Activated CD4-positive, alpha-beta memory T cell treated with anti-CD3 and anti-CD28 coated beads for 36 hours (primary cell): ENCODE measurements at regions of chr9 and their contacts with region 1.

Region 1: GRCh38 chr9:78011049-78011448 is 20.6 kb downstream of the GNAQ start:
- DNase-seq: no peak
- H3K4me3 Mint-ChIP-seq: no peak overlapping the region
- H3K27ac Mint-ChIP-seq: peak overlapping the region; percentile 67
- H3K4me1 Mint-ChIP-seq: peaks cover 63% of the 10 kb centered on the region
- H3K27me3 Mint-ChIP-seq: no peaks in the 10 kb centered on the region

Region 2: GRCh38 chr9:77864211-77864889 is 146.7 kb before region 1 on chr9:
- CTCF ChIA-PET with region 1: no interaction called
- POLR2A ChIA-PET with region 1: no interaction called
- intact Hi-C with region 1: no loop called
- DNase-seq: no peak
- H3K4me3 Mint-ChIP-seq: no peak overlapping the region
- H3K27ac Mint-ChIP-seq: no peak overlapping the region
- H3K4me1 Mint-ChIP-seq: peaks cover 9% of the 10 kb centered on the region
- H3K27me3 Mint-ChIP-seq: no peaks in the 10 kb centered on the region

Region 3: DNA sequence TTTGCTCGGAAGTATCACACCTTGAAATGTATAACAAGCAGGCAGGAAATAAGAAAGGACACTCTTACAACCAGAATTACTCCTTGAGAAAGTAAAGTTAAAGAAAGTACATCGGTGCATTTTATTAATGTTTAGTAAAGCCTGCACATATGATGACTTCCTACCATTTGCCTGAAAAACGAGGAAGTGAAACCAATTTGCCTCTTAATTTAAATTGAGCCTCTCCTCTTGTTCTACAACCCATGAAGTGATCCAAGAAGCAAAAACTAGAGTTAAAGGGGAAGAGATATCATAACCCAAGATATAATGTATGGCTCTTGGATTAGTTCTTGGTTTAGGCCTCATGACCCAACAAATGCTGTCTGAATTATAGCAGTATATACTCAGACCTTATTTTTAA is 75.1 kb before region 1 on chr9:
- CTCF ChIA-PET with region 1: no interaction called
- POLR2A ChIA-PET with region 1: no interaction called
- intact Hi-C with region 1: loop called (anchors 5 kb)
- DNase-seq: no peak
- H3K4me3 Mint-ChIP-seq: no peak overlapping the region
- H3K27ac Mint-ChIP-seq: no peak overlapping the region
- H3K4me1 Mint-ChIP-seq: peaks cover 19% of the 10 kb centered on the region
- H3K27me3 Mint-ChIP-seq: no peaks in the 10 kb centered on the region

Region 4: DNA sequence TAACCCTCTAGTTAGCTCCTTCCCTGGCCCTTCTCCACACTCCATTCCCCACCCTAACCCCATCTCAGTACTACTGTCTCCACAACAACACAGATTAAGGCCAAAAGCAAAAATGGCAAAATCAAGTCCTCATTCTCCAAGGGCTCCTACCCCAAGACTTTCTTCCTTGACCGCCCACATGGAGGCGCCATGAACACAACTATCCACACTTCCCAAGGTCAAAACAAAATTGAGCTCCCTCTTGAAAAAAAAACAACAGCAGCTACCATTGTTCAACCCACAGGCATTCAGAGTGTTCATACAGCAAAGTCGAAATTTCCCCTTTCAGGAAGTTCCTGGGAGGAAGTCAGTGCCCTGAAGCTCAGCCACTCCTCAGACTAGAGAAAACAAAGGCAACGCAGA is 33.8 kb before region 1 on chr9:
- CTCF ChIA-PET with region 1: no interaction called
- POLR2A ChIA-PET with region 1: no interaction called
- intact Hi-C with region 1: loop called (anchors 2 kb)
- DNase-seq: peak; percentile 72
- H3K4me3 Mint-ChIP-seq: no peak overlapping the region
- H3K27ac Mint-ChIP-seq: peak overlapping the region; percentile 31
- H3K4me1 Mint-ChIP-seq: peaks cover 51% of the 10 kb centered on the region
- H3K27me3 Mint-ChIP-seq: no peaks in the 10 kb centered on the region

Region 5: GRCh38 chr9:78053627-78054026 is 42.6 kb after region 1 on chr9:
- CTCF ChIA-PET with region 1: no interaction called
- POLR2A ChIA-PET with region 1: no interaction called
- intact Hi-C with region 1: no loop called
- DNase-seq: peak; percentile 27
- H3K4me3 Mint-ChIP-seq: no peak overlapping the region
- H3K27ac Mint-ChIP-seq: no peak overlapping the region
- H3K4me1 Mint-ChIP-seq: peaks cover 19% of the 10 kb centered on the region
- H3K27me3 Mint-ChIP-seq: no peaks in the 10 kb centered on the region